Prostate gland (tissue), 2 donors: ENCODE measurements at regions of chr6 and their contacts with region 1.

Region 1: GRCh38 chr6:55886185-55886836 is 10.9 kb upstream of the BMP5 start:
- DNase-seq: no peak
- H3K4me3 ChIP-seq: no peak overlapping the region
- H3K27ac ChIP-seq: no peak overlapping the region
- H3K4me1 ChIP-seq: no peaks in the 10 kb centered on the region
- H3K27me3 ChIP-seq: no peaks in the 10 kb centered on the region
- CTCF ChIP-seq: peak in 3 of 4 experiments; percentile 41 to 55 (median 50)
- POLR2A ChIP-seq: no peak

Region 2: GRCh38 chr6:55276745-55277530 is 609.4 kb before region 1 on chr6:
- intact Hi-C with region 1: loop called (anchors 10 kb)
- DNase-seq: peak; percentile 36
- H3K4me3 ChIP-seq: no peak overlapping the region
- H3K27ac ChIP-seq: no peak overlapping the region
- H3K4me1 ChIP-seq: no peaks in the 10 kb centered on the region
- H3K27me3 ChIP-seq: no peaks in the 10 kb centered on the region
- CTCF ChIP-seq: peak in 3 of 4 experiments; percentile 48 to 62 (median 60)
- POLR2A ChIP-seq: no peak

Region 3: DNA sequence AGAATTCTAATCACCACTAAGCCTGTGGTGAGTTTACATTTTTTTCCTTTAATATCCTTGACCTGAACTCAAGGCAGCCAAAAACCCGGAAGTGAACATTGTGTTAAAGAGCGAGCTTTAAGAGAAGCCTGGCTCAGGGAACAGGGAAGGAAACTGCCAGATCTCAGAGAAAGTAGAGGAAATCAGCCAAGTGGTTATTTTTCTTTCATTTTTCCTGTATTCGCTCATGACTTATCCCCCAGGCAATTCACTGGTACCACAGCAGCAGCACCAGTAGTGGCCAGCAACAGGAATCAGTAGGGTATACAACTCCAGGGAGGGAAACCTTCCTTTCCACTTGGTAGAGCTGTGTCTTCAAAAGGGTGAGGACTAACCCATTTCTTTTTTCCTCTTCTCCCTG is 217.7 kb before region 1 on chr6:
- intact Hi-C with region 1: loop called (anchors 5 kb)
- DNase-seq: no peak
- H3K4me3 ChIP-seq: no peak overlapping the region
- H3K27ac ChIP-seq: peak overlapping the region in 1 of 2 donors; percentile 5
- H3K4me1 ChIP-seq: no peaks in the 10 kb centered on the region
- H3K27me3 ChIP-seq: no peaks in the 10 kb centered on the region
- CTCF ChIP-seq: no peak
- POLR2A ChIP-seq: no peak

Region 4: DNA sequence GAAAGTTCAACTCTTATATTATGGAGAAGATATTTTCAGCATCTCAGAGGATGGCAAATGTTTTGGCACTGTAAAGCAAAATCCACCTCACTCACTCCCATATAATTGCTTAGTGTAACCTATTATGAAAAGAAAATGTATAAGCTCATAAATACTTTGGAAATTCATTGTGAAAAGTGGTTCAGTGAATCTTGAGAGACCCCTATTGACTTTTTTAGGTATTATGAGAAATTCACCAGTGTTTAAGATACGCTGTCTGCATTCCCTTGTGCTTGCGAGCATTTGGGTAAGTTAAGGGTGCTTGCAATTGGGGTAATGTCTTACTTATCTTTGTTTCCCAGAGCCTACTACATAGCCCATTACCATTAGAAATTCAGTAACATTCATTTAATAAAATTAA is 55.4 kb after region 1 on chr6:
- intact Hi-C with region 1: loop called (anchors 10 kb)
- DNase-seq: no peak
- H3K4me3 ChIP-seq: no peak overlapping the region
- H3K27ac ChIP-seq: no peak overlapping the region
- H3K4me1 ChIP-seq: no peaks in the 10 kb centered on the region
- H3K27me3 ChIP-seq: no peaks in the 10 kb centered on the region
- CTCF ChIP-seq: no peak
- POLR2A ChIP-seq: no peak